ENCODE measurements at regions of chr10 and their contacts with region 1.

Region 1: GRCh38 chr10:104231784-104232612 is at the start of gene CFAP43:
- DNase-seq: peak; percentile 98 to 100 (median 98)
- ATAC-seq: peak; percentile 100
- H3K4me3 ChIP-seq: peak within 1 kb of the TSS; percentile 61 to 93 (median 84)
- H3K27ac ChIP-seq: peak within 1 kb of the TSS in 3 of 12 donors; percentile 10 to 64 (median 47)
- H3K4me1 ChIP-seq: peaks cover 0 to 11% (median 5%) of the 10 kb centered on the region in 12 donors
- H3K27me3 ChIP-seq: peaks cover 0 to 7% (median 0%) of the 10 kb centered on the region in 9 donors
- CTCF ChIP-seq: no peak
- POLR2A ChIP-seq: peak in 1 of 2 donors; percentile 28
- total RNA-seq, gene CFAP43: 0.19 to 0.84 (median 0.25) TPM in 3 of 9 donors, not detected in the others

Region 2: DNA sequence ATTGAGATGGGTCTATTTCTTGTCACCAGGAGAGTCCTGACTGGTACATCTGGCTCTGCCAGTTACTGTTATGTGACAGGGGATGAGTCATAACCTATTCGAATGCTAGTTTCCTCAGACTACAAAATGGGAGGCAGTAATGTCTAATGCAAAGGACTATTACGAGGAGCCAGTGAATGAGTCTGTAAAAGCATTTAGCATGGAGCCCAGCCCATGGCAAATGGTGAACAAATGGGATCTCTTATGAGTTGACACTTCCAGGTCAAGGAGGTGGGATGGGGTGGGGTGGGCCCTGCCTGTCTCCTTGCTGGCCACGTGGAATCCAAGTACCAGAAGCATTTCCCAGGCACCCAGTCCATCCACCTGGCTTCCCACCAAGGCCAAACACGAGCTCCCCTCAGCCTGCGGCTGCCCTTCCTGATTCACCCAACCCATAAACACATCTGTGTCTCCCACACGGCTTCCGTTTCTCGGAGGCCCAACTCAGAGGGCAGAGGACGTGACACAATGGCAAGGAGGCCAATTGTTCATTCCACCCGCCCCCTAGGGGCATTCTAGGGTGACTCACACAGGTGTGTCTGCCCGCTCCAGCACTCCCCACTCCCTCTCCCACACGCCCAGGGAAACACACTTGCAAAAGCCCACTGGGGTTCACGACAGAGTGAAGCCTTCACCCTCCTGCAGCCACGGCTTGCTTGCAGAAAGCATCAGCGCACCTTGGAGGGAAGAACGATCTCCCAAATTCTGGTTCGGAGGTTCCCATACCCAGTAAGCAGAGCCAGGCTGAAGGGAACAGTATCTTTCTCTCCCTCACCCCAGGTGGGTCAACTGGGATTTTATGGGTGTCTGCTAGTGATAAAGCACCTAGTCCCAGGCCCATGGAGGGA is 486.4 kb before region 1 on chr10:
- intact Hi-C with region 1: no loop called
- DNase-seq: peak in 3 of 5 donors; percentile 39 to 74 (median 49)
- ATAC-seq: peak in 3 of 4 donors; percentile 51 to 77 (median 61)
- H3K4me3 ChIP-seq: no peak overlapping the region
- H3K27ac ChIP-seq: peak overlapping the region in 11 of 12 donors; percentile 2 to 73 (median 43)
- H3K4me1 ChIP-seq: peaks cover 0 to 61% (median 22%) of the 10 kb centered on the region in 12 donors
- H3K27me3 ChIP-seq: no peaks in the 10 kb centered on the region
- CTCF ChIP-seq: no peak
- POLR2A ChIP-seq: no peak

Region 3: DNA sequence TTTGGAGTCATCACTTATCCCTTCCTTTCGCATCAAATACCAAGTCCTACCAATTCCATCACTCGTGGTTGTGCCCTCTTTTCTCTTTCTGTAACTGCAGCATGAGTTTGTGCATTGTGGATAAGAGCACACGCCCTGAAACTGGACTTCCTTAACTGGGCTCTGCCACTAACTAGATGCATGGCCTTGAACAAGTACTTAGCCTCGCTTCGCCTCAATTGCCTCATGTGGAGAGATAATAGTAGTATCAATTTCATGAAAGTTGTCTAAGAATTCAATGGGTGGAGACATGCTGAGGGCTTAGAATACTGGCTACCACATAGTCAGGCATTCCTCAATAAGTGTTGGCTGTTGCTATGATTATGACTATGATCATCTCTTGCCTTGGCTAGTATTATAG is 41.3 kb before region 1 on chr10:
- intact Hi-C with region 1: no loop called
- DNase-seq: no peak
- ATAC-seq: no peak
- H3K4me3 ChIP-seq: no peak overlapping the region
- H3K27ac ChIP-seq: no peak overlapping the region
- H3K4me1 ChIP-seq: no peaks in the 10 kb centered on the region
- H3K27me3 ChIP-seq: no peaks in the 10 kb centered on the region
- CTCF ChIP-seq: no peak
- POLR2A ChIP-seq: no peak

Region 4: DNA sequence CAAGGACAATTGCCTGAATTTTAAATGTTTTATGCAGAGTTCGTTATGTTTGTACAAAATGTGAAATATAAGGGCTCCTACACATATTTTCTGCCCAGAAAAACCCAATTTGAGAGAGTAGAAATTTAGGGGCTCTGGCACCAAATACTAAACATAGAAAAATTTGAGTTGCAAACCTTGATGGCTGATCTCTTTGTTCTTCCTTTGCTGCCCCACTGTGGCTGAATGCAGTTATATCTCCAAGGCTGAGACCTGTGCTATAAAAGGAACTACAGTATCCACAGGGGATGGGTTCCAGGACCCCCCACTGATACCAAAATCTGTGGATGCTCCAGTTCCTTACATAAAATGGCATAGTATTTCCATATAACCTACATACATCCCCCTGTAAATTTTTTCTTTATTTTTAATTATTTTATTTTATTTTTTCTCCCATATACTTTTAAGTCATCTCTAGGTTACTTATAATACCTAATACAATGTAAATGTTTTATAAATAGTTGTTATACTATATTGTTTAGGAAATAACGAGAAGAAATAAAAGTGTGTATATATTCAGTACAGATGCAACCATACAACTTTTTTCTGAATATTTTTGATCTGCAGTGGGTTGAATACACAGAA is 22.3 kb before region 1 on chr10:
- intact Hi-C with region 1: no loop called
- DNase-seq: peak in 2 of 5 donors; percentile 20 to 33
- ATAC-seq: peak in 3 of 4 donors; percentile 49 to 71 (median 68)
- H3K4me3 ChIP-seq: no peak overlapping the region
- H3K27ac ChIP-seq: no peak overlapping the region
- H3K4me1 ChIP-seq: peaks cover 0 to 4% (median 0%) of the 10 kb centered on the region in 12 donors
- H3K27me3 ChIP-seq: no peaks in the 10 kb centered on the region
- CTCF ChIP-seq: peak; percentile 30 to 70 (median 52)
- POLR2A ChIP-seq: no peak

Region 5: GRCh38 chr10:104254493-104255310 is 22.7 kb after region 1 on chr10 and contains the start of gene GSTO1:
- intact Hi-C with region 1: loop called in 3 of 10 experiments (anchors 1 to 2 kb)
- DNase-seq: peak; percentile 87 to 92 (median 89)
- ATAC-seq: peak; percentile 82 to 93 (median 91)
- H3K4me3 ChIP-seq: peak within 1 kb of the TSS; percentile 76 to 98 (median 86)
- H3K27ac ChIP-seq: peak within 1 kb of the TSS; percentile 96 to 100 (median 98)
- H3K4me1 ChIP-seq: peaks cover 3 to 50% (median 33%) of the 10 kb centered on the region in 12 donors
- H3K27me3 ChIP-seq: no peaks in the 10 kb centered on the region
- CTCF ChIP-seq: peak in 2 of 12 donors; percentile 2 to 10
- POLR2A ChIP-seq: peak in 1 of 2 donors; percentile 77
- total RNA-seq, gene GSTO1: 194 to 372 (median 209) TPM

Region 6: GRCh38 chr10:104268716-104269645 is 37.0 kb after region 1 on chr10 and contains the start of gene GSTO2:
- intact Hi-C with region 1: loop called in 1 of 10 experiments (anchors 2 kb)
- DNase-seq: peak; percentile 99 to 100 (median 100)
- ATAC-seq: peak; percentile 100
- H3K4me3 ChIP-seq: peak within 1 kb of the TSS; percentile 53 to 97 (median 78)
- H3K27ac ChIP-seq: peak within 1 kb of the TSS; percentile 41 to 92 (median 84)
- H3K4me1 ChIP-seq: peaks cover 0 to 29% (median 10%) of the 10 kb centered on the region in 12 donors
- H3K27me3 ChIP-seq: no peaks in the 10 kb centered on the region
- CTCF ChIP-seq: no peak
- POLR2A ChIP-seq: peak in 1 of 2 donors; percentile 79
- total RNA-seq, gene GSTO2: 0.59 to 1.9 (median 0.94) TPM

Measured in heart left ventricle (tissue), 16 donors.